ENCODE measurements at regions of chr2 and their contacts with region 1.

Region 1: GRCh38 chr2:209564816-209565215 is 141.0 kb downstream of the MAP2 start:
- DNase-seq: no peak
- ATAC-seq: no peak

Region 2: GRCh38 chr2:209663150-209663549 is 98.3 kb after region 1 on chr2:
- intact Hi-C with region 1: loop called in 1 of 2 experiments (anchors 5 kb)
- DNase-seq: no peak
- ATAC-seq: no peak